Psoas muscle (tissue), 8 donors: ENCODE measurements at regions of chr3 and their contacts with region 1.

Region 1: DNA sequence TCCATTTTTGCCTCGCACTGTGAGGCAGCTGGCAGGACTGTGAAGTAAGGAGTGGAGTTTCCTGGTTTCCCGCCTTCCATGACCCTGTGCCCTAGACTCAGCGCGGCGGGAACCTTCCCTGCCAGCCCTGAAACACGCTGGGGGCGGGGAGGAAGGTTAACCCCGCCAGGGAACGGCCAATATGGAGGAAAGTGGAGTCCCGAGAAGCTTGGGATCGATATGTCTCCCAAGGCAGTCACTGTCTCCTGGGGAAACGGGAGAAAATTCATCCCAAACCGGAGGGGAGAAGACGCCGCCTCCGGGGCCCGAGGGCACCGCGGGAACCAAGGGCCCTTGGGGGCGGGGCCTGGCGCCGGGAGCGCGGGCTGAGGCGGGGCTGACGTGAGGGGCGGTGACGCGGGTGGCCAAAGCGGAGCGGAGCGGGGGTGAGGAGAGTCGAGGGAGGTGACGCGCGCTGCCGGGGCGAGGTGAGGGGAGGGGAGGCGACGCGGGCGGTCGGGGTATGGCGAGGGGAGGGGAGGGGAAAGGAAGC is at the start of gene HMCES:
- DNase-seq: peak; percentile 94 to 97
- ATAC-seq: peak; percentile 97 to 99 (median 98)
- H3K4me3 ChIP-seq: peak within 1 kb of the TSS; percentile 92
- H3K27ac ChIP-seq: peak within 1 kb of the TSS; percentile 91
- H3K4me1 ChIP-seq: peaks cover 18% of the 10 kb centered on the region
- H3K27me3 ChIP-seq: no peaks in the 10 kb centered on the region
- CTCF ChIP-seq: no peak
- total RNA-seq, gene HMCES: 33.9 to 37.4 (median 37.0) TPM

Region 2: DNA sequence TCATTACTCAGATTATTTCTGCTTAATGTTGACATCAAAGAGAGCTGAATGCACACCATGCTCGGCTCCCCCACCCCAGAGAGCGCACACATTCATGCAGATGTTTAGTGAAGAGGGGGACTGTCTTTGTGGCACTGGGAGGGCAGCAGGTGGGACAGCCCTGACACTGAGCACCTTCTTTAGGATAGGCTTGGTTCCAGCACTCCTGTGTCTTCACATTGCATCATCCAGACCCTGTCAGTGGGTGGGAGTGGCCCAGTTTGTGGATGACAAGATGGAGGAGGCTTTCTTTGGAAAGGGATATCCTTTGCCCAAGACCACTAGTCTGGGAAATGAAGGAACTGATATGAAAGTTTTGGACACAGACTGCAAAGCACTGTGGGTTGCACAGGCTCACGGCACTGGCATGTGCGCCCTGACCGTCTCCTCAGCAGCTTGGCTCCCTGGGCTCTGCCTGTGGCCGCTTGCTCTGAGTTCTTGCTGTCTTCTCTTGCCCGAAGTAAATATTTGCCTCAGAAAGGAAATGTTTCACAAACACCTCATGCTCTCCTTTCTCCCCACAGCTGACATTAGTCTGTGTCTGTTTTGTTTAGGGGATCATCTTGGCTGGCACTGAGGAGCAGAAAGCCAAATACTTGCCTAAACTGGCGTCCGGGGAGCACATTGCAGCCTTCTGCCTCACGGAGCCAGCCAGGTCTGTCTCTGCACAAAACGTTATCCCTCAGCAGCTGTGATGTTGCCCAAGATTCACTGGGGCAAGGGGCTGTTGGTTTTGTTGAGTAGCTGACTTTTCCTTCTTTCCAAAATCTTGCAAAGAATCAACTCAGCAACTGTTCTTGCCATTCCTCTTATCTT is 382.4 kb before region 1 on chr3:
- intact Hi-C with region 1: loop called in 1 of 2 experiments (anchors 10 kb)
- DNase-seq: no peak
- ATAC-seq: no peak
- H3K4me3 ChIP-seq: no peak overlapping the region
- H3K27ac ChIP-seq: no peak overlapping the region
- H3K4me1 ChIP-seq: no peaks in the 10 kb centered on the region
- H3K27me3 ChIP-seq: no peaks in the 10 kb centered on the region
- CTCF ChIP-seq: no peak

Region 3: DNA sequence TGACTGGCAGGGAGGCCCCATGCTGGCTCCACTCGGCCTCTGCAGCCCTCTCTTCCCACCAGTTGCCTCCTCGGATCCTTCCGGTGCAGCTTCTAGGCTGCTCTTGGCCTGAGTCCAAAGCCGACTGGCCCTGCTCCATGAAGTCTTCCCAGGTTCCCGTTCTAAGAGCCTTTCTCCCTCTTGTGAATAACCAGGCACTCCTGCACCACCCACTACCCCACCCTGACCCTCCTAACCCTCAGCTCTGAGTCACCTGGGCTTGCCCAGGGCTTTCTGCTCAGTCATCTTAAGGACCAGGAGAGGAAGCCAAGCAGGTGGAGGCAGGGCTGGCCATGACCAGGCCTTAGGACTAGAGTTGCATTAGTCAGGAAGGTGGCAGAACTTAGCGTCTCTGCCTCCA is 66.7 kb before region 1 on chr3:
- intact Hi-C with region 1: no loop called
- DNase-seq: peak; percentile 72 to 86
- ATAC-seq: peak; percentile 99 to 100 (median 100)
- H3K4me3 ChIP-seq: peak overlapping the region; percentile 41
- H3K27ac ChIP-seq: peak overlapping the region; percentile 72
- H3K4me1 ChIP-seq: peaks cover 16% of the 10 kb centered on the region
- H3K27me3 ChIP-seq: no peaks in the 10 kb centered on the region
- CTCF ChIP-seq: no peak

Region 4: DNA sequence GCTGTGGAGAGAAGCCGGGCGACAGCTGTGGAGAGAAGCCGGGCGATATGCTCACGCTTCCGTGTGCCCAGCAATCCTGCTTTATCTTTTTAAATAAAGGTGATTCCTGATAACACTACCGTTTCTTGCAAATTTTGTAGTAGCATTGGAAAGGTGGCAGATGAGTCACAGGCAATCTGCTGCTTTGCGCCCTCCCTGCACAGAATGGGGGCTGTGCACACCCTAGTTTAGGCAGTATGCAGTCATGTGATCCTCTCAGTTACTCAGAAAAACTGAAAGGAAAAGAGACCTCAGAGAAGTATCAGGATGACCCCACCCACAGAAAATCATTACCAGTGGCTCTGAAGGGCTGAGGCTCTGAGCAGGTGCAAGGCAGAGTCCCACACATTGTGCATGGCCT is 640.0 kb after region 1 on chr3:
- intact Hi-C with region 1: no loop called
- DNase-seq: no peak
- ATAC-seq: no peak
- H3K4me3 ChIP-seq: no peak overlapping the region
- H3K27ac ChIP-seq: no peak overlapping the region
- H3K4me1 ChIP-seq: no peaks in the 10 kb centered on the region
- H3K27me3 ChIP-seq: no peaks in the 10 kb centered on the region
- CTCF ChIP-seq: no peak